GM10248 (cell line): ENCODE measurements at regions of chr17 and their contacts with region 1.

Region 1: GRCh38 chr17:78999056-78999768 is 10.4 kb downstream of the CANT1 start:
- DNase-seq: no peak
- CTCF ChIP-seq: no peak

Region 2: GRCh38 chr17:78904371-78904770 is 94.8 kb before region 1 on chr17:
- CTCF ChIA-PET with region 1: no interaction called
- POLR2A ChIA-PET with region 1: interaction called, 11 read pairs
- DNase-seq: no peak
- CTCF ChIP-seq: no peak